Astrocyte of the cerebellum (primary cell): ENCODE measurements at regions of chr20 and their contacts with region 1.

Region 1: GRCh38 chr20:40525351-40525750 is 163.7 kb downstream of the MAFB start:
- DNase-seq: no peak
- H3K4me3 ChIP-seq: no peak overlapping the region
- CTCF ChIP-seq: no peak

Region 2: DNA sequence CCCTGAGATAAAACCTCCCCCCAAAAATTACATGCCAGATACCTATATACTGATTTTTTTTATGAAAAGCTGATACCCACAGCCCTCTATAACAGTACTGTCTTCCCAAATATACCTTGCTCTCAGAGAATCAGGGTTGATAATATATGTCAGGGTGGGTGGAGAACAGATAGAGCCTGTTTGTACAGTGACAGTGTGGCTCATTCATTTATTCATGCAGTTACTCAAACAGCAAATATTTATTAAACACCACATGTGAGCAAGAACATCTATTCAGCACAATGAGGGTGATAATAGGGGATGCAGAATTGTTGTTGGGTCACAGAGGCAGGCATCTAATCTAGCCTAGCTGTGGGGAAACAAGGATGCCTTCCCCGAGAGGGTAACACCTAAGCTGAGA is 170.5 kb before region 1 on chr20:
- in situ Hi-C with region 1: no loop called
- DNase-seq: no peak
- H3K4me3 ChIP-seq: no peak overlapping the region
- CTCF ChIP-seq: no peak

Region 3: DNA sequence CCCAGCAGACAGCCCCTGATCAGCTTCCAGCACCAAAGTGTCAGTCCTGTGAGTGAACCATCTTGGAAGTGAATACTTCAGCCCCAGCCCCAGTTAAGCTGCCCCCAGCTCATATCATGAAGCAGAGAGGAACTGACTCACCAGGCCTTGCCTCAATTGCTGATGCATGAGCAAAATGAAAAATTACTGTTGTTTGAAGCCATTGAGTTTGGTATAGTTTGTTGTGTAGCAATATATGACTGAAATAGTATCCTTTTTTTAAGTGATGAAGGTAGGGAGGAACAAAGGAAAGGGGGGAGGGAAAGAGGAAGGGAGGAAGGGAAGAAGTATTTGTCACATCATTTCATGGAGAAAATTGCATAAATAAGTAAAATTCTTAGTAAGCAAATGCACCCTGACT is 102.7 kb before region 1 on chr20:
- in situ Hi-C with region 1: no loop called
- DNase-seq: no peak
- H3K4me3 ChIP-seq: no peak overlapping the region
- CTCF ChIP-seq: no peak

Region 4: DNA sequence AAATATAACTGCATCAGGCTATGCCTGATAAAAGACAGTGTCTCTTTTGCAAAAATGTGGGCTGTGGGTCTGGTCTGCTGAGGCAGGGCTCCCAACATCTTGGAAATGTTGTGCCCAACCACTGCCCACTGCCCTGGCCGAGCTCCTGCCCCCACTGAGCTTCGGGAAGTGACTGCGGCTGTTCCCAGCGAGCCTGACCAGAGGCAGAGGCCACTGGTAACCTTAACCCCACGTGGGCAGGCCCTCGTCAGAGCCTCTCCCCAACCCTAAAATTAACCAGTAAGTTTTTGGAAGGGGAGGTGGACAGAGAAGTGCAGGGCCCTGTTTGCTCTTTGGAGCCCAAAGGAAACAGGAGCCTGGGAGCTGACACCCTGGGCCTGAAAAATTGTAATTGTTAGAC is 62.2 kb before region 1 on chr20:
- in situ Hi-C with region 1: no loop called
- DNase-seq: no peak
- H3K4me3 ChIP-seq: no peak overlapping the region
- CTCF ChIP-seq: no peak

Region 5: GRCh38 chr20:40583205-40583604 is 57.9 kb after region 1 on chr20:
- in situ Hi-C with region 1: loop called (anchors 5 kb)
- DNase-seq: no peak
- H3K4me3 ChIP-seq: no peak overlapping the region
- CTCF ChIP-seq: no peak

Region 6: DNA sequence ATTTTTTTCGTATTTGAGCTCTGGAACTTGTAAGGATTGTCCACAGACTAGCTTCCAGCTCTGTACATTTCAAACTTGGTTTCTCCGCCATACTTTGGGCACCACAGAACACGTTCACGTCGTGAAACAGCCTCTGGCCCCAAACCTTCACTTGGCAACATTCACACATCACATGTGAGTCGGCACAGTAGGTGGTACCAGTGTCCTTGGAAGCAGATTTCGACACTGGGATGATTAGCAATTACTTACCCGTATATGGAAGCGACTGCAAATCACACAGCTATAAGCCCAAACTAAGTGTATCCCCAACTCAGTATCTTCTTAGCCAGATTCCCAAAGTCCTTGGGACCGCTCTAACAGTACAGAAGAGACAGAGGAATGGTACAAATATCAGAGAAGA is 103.5 kb after region 1 on chr20:
- in situ Hi-C with region 1: no loop called
- DNase-seq: no peak
- H3K4me3 ChIP-seq: no peak overlapping the region
- CTCF ChIP-seq: no peak